ENCODE measurements at regions of chr5 and their contacts with region 1.

Region 1: GRCh38 chr5:32076699-32077695 is 97.1 kb downstream of the GOLPH3 start:
- DNase-seq: peak; percentile 40
- ATAC-seq: no peak; the same call in 1 of the 2 replicates
- H3K4me3 Mint-ChIP-seq: no peak overlapping the region
- H3K27ac Mint-ChIP-seq: no peak overlapping the region
- H3K4me1 Mint-ChIP-seq: no peaks in the 10 kb centered on the region
- H3K27me3 Mint-ChIP-seq: no peaks in the 10 kb centered on the region
- CTCF ChIP-seq: peak; percentile 58

Region 2: DNA sequence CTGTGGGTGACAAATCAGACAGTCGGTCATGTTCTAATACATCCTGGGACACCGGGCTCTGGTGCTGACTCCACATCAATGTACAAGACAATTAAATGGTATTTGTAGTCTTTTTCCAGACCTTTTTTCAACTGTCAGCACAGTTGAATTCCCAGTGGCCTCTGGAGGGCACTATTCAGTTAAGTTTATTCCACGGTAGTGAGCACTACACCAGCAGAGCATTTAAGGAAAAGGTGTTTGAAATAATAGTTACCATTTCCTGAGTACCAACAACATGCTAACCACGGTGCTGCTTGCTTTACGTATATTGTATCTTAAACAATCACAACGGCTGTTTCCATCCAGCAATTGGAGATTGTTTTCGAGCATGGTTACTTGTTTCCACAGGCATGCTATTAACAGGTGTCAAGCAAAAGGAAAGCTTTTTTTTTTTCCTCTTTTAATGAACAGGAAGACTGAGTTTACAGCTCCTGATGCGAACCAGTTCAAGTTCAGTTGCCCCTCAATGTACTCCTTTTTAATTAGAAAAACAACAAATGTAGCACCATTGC is 251.4 kb before region 1 on chr5:
- CTCF ChIA-PET with region 1: interaction called, 64 read pairs
- POLR2A ChIA-PET with region 1: interaction called, 3 read pairs
- DNase-seq: peak; percentile 52
- ATAC-seq: peak; percentile 95
- H3K4me3 Mint-ChIP-seq: no peak overlapping the region
- H3K27ac Mint-ChIP-seq: no peak overlapping the region
- H3K4me1 Mint-ChIP-seq: 0 out of 2 replicates have a peak, but pooled peaks cover 4% of the 10 kb centered on the region
- H3K27me3 Mint-ChIP-seq: no peaks in the 10 kb centered on the region
- CTCF ChIP-seq: peak; percentile 23; the same call in 1 of the 2 replicates

Region 3: GRCh38 chr5:31854181-31855133 is 222.5 kb before region 1 on chr5:
- CTCF ChIA-PET with region 1: interaction called, 38 read pairs
- POLR2A ChIA-PET with region 1: interaction called, 3 read pairs
- DNase-seq: peak; percentile 66
- ATAC-seq: peak; percentile 64
- H3K4me3 Mint-ChIP-seq: peak overlapping the region; percentile 95
- H3K27ac Mint-ChIP-seq: peak overlapping the region; percentile 98
- H3K4me1 Mint-ChIP-seq: peaks cover 41% of the 10 kb centered on the region
- H3K27me3 Mint-ChIP-seq: no peaks in the 10 kb centered on the region
- CTCF ChIP-seq: no peak

Region 4: DNA sequence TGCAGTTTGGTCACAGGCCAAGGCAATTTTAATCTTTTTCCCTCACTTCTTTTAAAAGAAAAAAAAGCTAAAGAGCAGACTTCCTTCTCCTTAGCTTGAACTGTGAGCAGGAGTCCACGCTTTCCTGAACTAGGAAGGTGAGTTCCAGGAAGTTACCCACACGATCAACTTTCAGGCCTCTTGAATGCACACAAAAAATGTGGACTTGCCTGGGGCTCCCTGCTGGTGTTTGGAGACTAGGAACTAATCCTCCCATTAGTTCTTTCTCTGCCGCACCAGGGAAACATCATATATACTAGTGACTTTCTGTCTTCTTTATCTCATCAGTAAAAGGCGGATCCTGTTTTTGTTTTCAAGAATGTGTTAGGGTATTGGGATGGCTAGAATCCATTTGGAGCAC is 142.8 kb before region 1 on chr5:
- CTCF ChIA-PET with region 1: interaction called, 13 read pairs
- POLR2A ChIA-PET with region 1: no interaction called
- DNase-seq: no peak
- ATAC-seq: no peak
- H3K4me3 Mint-ChIP-seq: no peak overlapping the region
- H3K27ac Mint-ChIP-seq: 0 out of 2 replicates have a peak overlapping the region, but pooled peaks have one; percentile 9
- H3K4me1 Mint-ChIP-seq: peaks cover 7% of the 10 kb centered on the region
- H3K27me3 Mint-ChIP-seq: no peaks in the 10 kb centered on the region; the same call in 1 of the 2 replicates
- CTCF ChIP-seq: no peak

Region 5: GRCh38 chr5:32027717-32028321 is 49.2 kb before region 1 on chr5:
- CTCF ChIA-PET with region 1: interaction called, 12 read pairs
- POLR2A ChIA-PET with region 1: no interaction called
- DNase-seq: no peak
- ATAC-seq: peak; percentile 75
- H3K4me3 Mint-ChIP-seq: no peak overlapping the region
- H3K27ac Mint-ChIP-seq: peak overlapping the region; percentile 85
- H3K4me1 Mint-ChIP-seq: peaks cover 34% of the 10 kb centered on the region
- H3K27me3 Mint-ChIP-seq: no peaks in the 10 kb centered on the region; the same call in 1 of the 2 replicates
- CTCF ChIP-seq: no peak

Region 6: GRCh38 chr5:32092938-32093812 is 16.2 kb after region 1 on chr5:
- CTCF ChIA-PET with region 1: interaction called, 30 read pairs
- POLR2A ChIA-PET with region 1: interaction called, 7 read pairs
- DNase-seq: peak; percentile 77
- ATAC-seq: peak; percentile 94
- H3K4me3 Mint-ChIP-seq: no peak overlapping the region
- H3K27ac Mint-ChIP-seq: 0 out of 2 replicates have a peak overlapping the region, but pooled peaks have one; percentile 41
- H3K4me1 Mint-ChIP-seq: peaks cover 5% of the 10 kb centered on the region
- H3K27me3 Mint-ChIP-seq: no peaks in the 10 kb centered on the region
- CTCF ChIP-seq: peak; percentile 58

Region 7: GRCh38 chr5:32339198-32339597 is 262.2 kb after region 1 on chr5:
- CTCF ChIA-PET with region 1: no interaction called
- POLR2A ChIA-PET with region 1: no interaction called
- DNase-seq: no peak
- ATAC-seq: no peak
- H3K4me3 Mint-ChIP-seq: no peak overlapping the region
- H3K27ac Mint-ChIP-seq: no peak overlapping the region
- H3K4me1 Mint-ChIP-seq: no peaks in the 10 kb centered on the region
- H3K27me3 Mint-ChIP-seq: peaks cover 11% of the 10 kb centered on the region
- CTCF ChIP-seq: no peak

Measured in WTC11 (cell line).